ENCODE measurements at regions of chr13 and their contacts with region 1.

Region 1: DNA sequence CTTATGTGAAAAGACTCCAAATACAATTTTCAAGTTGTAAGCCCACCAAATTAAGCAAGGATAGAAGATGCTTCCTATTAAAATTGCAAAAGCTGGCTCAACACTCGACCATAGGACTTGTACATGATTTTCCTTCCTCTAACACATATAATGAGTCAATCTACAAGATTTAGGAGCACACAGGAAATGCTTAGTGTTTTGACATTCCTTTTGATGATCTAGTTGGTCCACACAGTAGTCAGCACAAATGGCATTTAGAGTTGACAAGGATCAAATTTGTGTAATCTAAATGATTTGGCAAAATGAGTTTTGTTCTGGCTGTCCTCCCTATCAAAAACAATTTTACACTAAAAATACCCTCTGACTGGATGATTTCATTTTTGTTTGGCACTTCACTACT is 340.2 kb downstream of the DIAPH3 start:
- DNase-seq: no peak
- H3K4me3 ChIP-seq: no peak overlapping the region
- H3K27ac ChIP-seq: no peak overlapping the region
- H3K4me1 ChIP-seq: no peaks in the 10 kb centered on the region
- CTCF ChIP-seq: no peak

Region 2: GRCh38 chr13:59750860-59751259 is 72.6 kb before region 1 on chr13:
- CTCF ChIA-PET with region 1: no interaction called
- POLR2A ChIA-PET with region 1: no interaction called
- intact Hi-C with region 1: loop called (anchors 10 kb)
- DNase-seq: no peak
- H3K4me3 ChIP-seq: no peak overlapping the region
- H3K27ac ChIP-seq: no peak overlapping the region
- H3K4me1 ChIP-seq: no peaks in the 10 kb centered on the region
- CTCF ChIP-seq: no peak

Region 3: GRCh38 chr13:61162636-61163035 is 1339.2 kb after region 1 on chr13:
- CTCF ChIA-PET with region 1: no interaction called
- POLR2A ChIA-PET with region 1: no interaction called
- intact Hi-C with region 1: no loop called
- DNase-seq: no peak
- H3K4me3 ChIP-seq: no peak overlapping the region
- H3K27ac ChIP-seq: no peak overlapping the region
- H3K4me1 ChIP-seq: no peaks in the 10 kb centered on the region
- CTCF ChIP-seq: no peak

Measured in OCI-LY7 (cell line).